ENCODE measurements at regions of chr2 and their contacts with region 1.

Region 1: DNA sequence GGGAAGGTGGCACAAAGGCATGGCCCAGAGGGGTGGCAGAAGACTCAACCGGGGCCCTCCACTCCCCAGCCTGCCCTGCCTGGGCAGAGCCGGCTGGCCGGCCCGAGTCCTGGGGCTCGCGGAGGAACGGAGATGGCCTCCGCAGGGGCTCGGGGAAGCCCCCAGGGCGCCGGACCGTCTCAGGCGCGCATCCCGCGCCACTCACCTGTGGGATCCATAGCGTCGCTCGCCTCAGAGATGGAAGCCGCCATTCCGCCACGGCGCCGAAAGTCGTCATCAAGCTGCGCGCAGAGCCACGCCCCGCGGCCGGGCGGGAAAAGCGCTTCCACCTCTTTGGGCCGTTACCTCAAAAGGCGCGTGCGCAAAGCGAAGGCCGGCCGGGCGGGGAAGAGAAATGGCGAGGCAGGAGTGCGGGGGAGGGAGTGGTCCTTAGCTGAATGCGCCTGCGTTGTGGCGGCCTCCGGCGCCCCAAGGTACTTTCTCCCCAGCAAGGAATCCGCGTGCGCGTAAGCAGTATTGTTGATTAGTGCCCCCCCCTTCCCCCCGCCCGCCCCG is at the start of gene SMPD4:
- DNase-seq: peak; percentile 96 to 98 (median 98)
- ATAC-seq: peak; percentile 84
- H3K4me3 ChIP-seq: peak within 1 kb of the TSS; percentile 77
- H3K4me3 Mint-ChIP-seq: peak within 1 kb of the TSS; percentile 87 to 94 (median 91)
- H3K27ac ChIP-seq: peak within 1 kb of the TSS; percentile 91
- H3K27ac Mint-ChIP-seq: peak within 1 kb of the TSS; percentile 87 to 97 (median 95)
- H3K4me1 ChIP-seq: peaks cover 8 to 18% of the 10 kb centered on the region in 2 donors
- H3K4me1 Mint-ChIP-seq: peaks cover 18 to 35% (median 24%) of the 10 kb centered on the region in 7 donors
- H3K27me3 ChIP-seq: no peaks in the 10 kb centered on the region
- H3K27me3 Mint-ChIP-seq: no peaks in the 10 kb centered on the region
- total RNA-seq, gene SMPD4: 52.5 to 82.9 (median 59.8) TPM

Region 2: DNA sequence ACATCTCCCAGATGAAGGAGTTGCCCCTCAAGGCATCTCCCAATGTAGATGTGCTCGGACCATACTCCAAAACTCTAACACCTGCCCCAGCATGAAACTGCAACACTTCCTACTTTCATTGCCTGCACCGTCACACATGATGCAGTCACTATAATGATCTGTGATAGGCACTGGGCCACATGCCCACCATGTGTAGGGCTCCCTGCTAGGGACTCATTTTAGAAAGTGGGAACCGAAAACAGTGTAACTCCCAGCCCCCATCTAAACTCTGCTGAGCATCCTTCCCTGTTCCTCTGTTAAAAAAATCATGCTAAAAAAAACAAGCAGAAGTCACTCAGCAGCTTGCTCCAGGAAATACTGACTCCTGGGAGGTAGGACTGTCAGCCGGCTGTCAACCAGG is 698.0 kb before region 1 on chr2:
- CTCF ChIA-PET with region 1: no interaction called
- POLR2A ChIA-PET with region 1: no interaction called
- intact Hi-C with region 1: no loop called
- DNase-seq: no peak
- ATAC-seq: peak; percentile 51
- H3K4me3 ChIP-seq: no peak overlapping the region
- H3K4me3 Mint-ChIP-seq: no peak overlapping the region
- H3K27ac ChIP-seq: no peak overlapping the region
- H3K27ac Mint-ChIP-seq: no peak overlapping the region
- H3K4me1 ChIP-seq: no peaks in the 10 kb centered on the region
- H3K4me1 Mint-ChIP-seq: peaks cover 0 to 5% (median 0%) of the 10 kb centered on the region in 7 donors
- H3K27me3 ChIP-seq: no peaks in the 10 kb centered on the region
- H3K27me3 Mint-ChIP-seq: peaks cover 0 to 12% (median 4%) of the 10 kb centered on the region in 5 donors

Region 3: GRCh38 chr2:129984426-129984825 is 197.0 kb before region 1 on chr2:
- CTCF ChIA-PET with region 1: no interaction called
- POLR2A ChIA-PET with region 1: no interaction called
- intact Hi-C with region 1: no loop called
- DNase-seq: no peak
- ATAC-seq: no peak
- H3K4me3 ChIP-seq: no peak overlapping the region
- H3K4me3 Mint-ChIP-seq: no peak overlapping the region
- H3K27ac ChIP-seq: no peak overlapping the region
- H3K27ac Mint-ChIP-seq: no peak overlapping the region
- H3K4me1 ChIP-seq: no peaks in the 10 kb centered on the region
- H3K4me1 Mint-ChIP-seq: peaks cover 4 to 12% (median 6%) of the 10 kb centered on the region in 7 donors
- H3K27me3 ChIP-seq: no peaks in the 10 kb centered on the region
- H3K27me3 Mint-ChIP-seq: peaks cover 38 to 63% (median 56%) of the 10 kb centered on the region in 5 donors

Region 4: GRCh38 chr2:130150181-130151144 is 30.9 kb before region 1 on chr2:
- CTCF ChIA-PET with region 1: no interaction called
- POLR2A ChIA-PET with region 1: no interaction called
- intact Hi-C with region 1: loop called (anchors 1 to 5 kb)
- DNase-seq: no peak
- ATAC-seq: no peak
- H3K4me3 ChIP-seq: no peak overlapping the region
- H3K4me3 Mint-ChIP-seq: no peak overlapping the region
- H3K27ac ChIP-seq: no peak overlapping the region
- H3K27ac Mint-ChIP-seq: no peak overlapping the region
- H3K4me1 ChIP-seq: no peaks in the 10 kb centered on the region
- H3K4me1 Mint-ChIP-seq: peaks cover 0 to 6% (median 0%) of the 10 kb centered on the region in 7 donors
- H3K27me3 ChIP-seq: no peaks in the 10 kb centered on the region
- H3K27me3 Mint-ChIP-seq: peaks cover 3 to 10% (median 7%) of the 10 kb centered on the region in 5 donors

Region 5: GRCh38 chr2:130316596-130316995 is 135.2 kb after region 1 on chr2:
- CTCF ChIA-PET with region 1: no interaction called
- POLR2A ChIA-PET with region 1: no interaction called
- intact Hi-C with region 1: no loop called
- DNase-seq: no peak
- ATAC-seq: no peak
- H3K4me3 ChIP-seq: no peak overlapping the region
- H3K4me3 Mint-ChIP-seq: no peak overlapping the region
- H3K27ac ChIP-seq: no peak overlapping the region
- H3K27ac Mint-ChIP-seq: no peak overlapping the region
- H3K4me1 ChIP-seq: no peaks in the 10 kb centered on the region
- H3K4me1 Mint-ChIP-seq: no peaks in the 10 kb centered on the region
- H3K27me3 ChIP-seq: no peaks in the 10 kb centered on the region
- H3K27me3 Mint-ChIP-seq: peaks cover 4 to 13% (median 6%) of the 10 kb centered on the region in 5 donors

Region 6: DNA sequence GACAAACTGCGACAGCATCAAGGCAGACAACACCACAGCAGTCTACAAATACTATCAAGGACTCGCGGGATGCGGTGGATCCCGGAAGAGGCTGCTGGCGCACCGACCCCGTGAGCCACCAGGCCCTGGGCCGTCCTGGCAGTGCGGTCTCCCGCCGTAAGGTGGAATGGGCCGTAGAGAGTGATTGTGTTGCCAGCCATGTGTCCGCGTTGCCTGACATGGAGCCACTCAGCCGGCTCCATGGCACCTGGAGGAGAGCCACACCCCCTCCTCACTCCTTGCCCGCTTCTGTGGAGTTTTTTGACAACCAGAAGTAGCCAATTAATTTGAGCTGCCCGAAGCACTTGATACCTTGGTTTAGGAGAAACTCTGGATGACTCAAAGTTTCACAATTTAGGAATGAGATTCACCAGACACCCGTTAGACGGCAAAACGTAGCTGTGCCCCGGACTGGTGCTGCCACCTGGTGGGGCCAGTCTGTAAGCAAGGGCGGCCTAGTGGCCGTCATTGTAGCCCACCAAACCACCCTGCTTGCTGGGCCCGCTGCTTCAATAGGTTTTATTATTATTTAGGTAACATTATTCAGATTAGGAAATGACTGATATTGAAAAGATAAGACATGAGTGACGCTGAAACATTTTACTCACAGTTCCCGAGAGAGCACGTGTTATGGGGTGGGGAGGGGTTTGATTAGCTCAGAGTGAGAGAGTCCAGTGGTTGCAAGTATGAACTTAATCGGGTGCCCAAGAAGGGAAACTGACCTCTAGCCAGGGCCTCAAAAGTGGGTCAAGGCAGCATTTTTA is 151.1 kb after region 1 on chr2:
- CTCF ChIA-PET with region 1: interaction called, 3 read pairs
- POLR2A ChIA-PET with region 1: interaction called, 4 read pairs
- intact Hi-C with region 1: loop called (anchors 1 to 2 kb)
- DNase-seq: peak; percentile 40 to 71 (median 60)
- ATAC-seq: peak; percentile 92
- H3K4me3 ChIP-seq: no peak overlapping the region
- H3K4me3 Mint-ChIP-seq: peak overlapping the region in 9 of 10 donors; percentile 15 to 64 (median 56)
- H3K27ac ChIP-seq: no peak overlapping the region
- H3K27ac Mint-ChIP-seq: peak overlapping the region in 1 of 9 donors; percentile 70
- H3K4me1 ChIP-seq: peaks cover 0 to 4% of the 10 kb centered on the region in 2 donors
- H3K4me1 Mint-ChIP-seq: peaks cover 4 to 9% (median 5%) of the 10 kb centered on the region in 7 donors
- H3K27me3 ChIP-seq: no peaks in the 10 kb centered on the region
- H3K27me3 Mint-ChIP-seq: peaks cover 26 to 37% (median 28%) of the 10 kb centered on the region in 5 donors

Region 7: DNA sequence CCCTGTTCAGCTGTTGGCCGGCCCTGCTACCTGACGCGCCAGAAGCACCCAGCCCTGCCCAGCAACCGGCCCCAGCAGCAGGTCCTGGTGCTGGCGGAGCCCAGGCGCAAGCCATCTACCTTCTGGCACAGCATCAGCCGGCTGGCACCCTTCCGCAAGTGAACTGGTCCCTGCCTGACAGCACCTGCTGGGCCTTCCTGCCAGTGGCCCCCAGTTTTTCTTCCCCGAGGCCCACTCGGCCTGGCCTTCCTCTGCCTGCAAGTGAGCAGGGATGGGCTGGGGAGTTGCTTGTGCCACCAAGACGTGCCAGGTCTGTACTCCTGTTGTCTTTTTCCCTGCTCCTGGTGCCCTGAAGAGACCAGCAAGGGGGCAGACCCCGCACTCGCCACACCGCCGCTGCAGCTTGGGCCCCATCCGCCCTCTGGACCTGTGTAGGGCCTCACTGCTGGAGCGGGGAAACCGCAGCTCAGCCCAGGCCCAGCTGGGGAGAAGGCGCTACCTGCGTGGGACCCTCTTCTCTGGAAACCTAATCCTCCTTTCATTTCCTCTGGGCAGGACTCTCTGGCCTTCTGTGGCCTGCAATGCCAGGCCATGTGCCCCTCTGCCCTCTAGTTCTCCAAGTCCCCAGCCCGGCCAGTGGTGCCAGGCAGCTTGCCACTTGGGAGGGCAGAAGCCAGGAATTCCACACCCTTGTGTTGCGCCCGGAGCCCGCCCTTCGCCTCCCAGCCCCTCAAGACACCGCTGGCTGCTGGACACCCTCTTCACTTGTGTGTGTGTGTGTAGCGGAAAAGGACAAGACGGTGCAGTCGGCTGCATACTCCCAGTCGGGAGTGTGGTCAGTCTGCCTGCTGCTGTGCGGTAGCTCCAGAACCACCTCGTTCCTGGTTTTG is 864.9 kb after region 1 on chr2:
- CTCF ChIA-PET with region 1: no interaction called
- POLR2A ChIA-PET with region 1: no interaction called
- intact Hi-C with region 1: no loop called
- DNase-seq: no peak
- ATAC-seq: peak; percentile 3
- H3K4me3 ChIP-seq: no peak overlapping the region
- H3K4me3 Mint-ChIP-seq: no peak overlapping the region
- H3K27ac ChIP-seq: no peak overlapping the region
- H3K27ac Mint-ChIP-seq: peak overlapping the region in 2 of 9 donors; percentile 65 to 70
- H3K4me1 ChIP-seq: peaks cover 10 to 11% of the 10 kb centered on the region in 2 donors
- H3K4me1 Mint-ChIP-seq: peaks cover 5 to 16% (median 12%) of the 10 kb centered on the region in 7 donors
- H3K27me3 ChIP-seq: no peaks in the 10 kb centered on the region
- H3K27me3 Mint-ChIP-seq: no peaks in the 10 kb centered on the region

Region 8: GRCh38 chr2:131093006-131093695 is 911.7 kb after region 1 on chr2 and contains the start of gene FAM168B:
- CTCF ChIA-PET with region 1: no interaction called
- POLR2A ChIA-PET with region 1: interaction called, 3 read pairs
- intact Hi-C with region 1: loop called in 1 of 2 experiments (anchors 5 kb)
- DNase-seq: peak; percentile 82 to 96 (median 92)
- ATAC-seq: peak; percentile 92
- H3K4me3 ChIP-seq: peak within 1 kb of the TSS; percentile 81
- H3K4me3 Mint-ChIP-seq: peak within 1 kb of the TSS; percentile 82 to 98 (median 94)
- H3K27ac ChIP-seq: peak within 1 kb of the TSS; percentile 99
- H3K27ac Mint-ChIP-seq: peak within 1 kb of the TSS; percentile 88 to 97 (median 96)
- H3K4me1 ChIP-seq: peaks cover 0 to 12% of the 10 kb centered on the region in 2 donors
- H3K4me1 Mint-ChIP-seq: peaks cover 7 to 37% (median 24%) of the 10 kb centered on the region in 7 donors
- H3K27me3 ChIP-seq: no peaks in the 10 kb centered on the region
- H3K27me3 Mint-ChIP-seq: no peaks in the 10 kb centered on the region
- total RNA-seq, gene FAM168B: 50.5 to 82.9 (median 66.7) TPM

Measured in naive thymus-derived CD4-positive, alpha-beta T cell (primary cell).